ENCODE measurements at regions of chr3 and their contacts with region 1.

Region 1: GRCh38 chr3:188954590-188955208 is 217.1 kb upstream of the TPRG1 start:
- DNase-seq: peak; percentile 60
- ATAC-seq: peak; percentile 66
- H3K4me3 Mint-ChIP-seq: no peak overlapping the region
- H3K27ac Mint-ChIP-seq: no peak overlapping the region
- H3K4me1 Mint-ChIP-seq: peaks cover 25% of the 10 kb centered on the region
- H3K27me3 Mint-ChIP-seq: peaks cover 1% of the 10 kb centered on the region
- CTCF ChIP-seq: no peak

Region 2: GRCh38 chr3:187319699-187320302 is 1634.9 kb before region 1 on chr3:
- CTCF ChIA-PET with region 1: interaction called, 9 read pairs
- POLR2A ChIA-PET with region 1: no interaction called
- intact Hi-C with region 1: loop called (anchors 1 kb)
- DNase-seq: no peak
- ATAC-seq: peak; percentile 64
- H3K4me3 Mint-ChIP-seq: no peak overlapping the region
- H3K27ac Mint-ChIP-seq: no peak overlapping the region
- H3K4me1 Mint-ChIP-seq: peaks cover 6% of the 10 kb centered on the region
- H3K27me3 Mint-ChIP-seq: peaks cover 36% of the 10 kb centered on the region
- CTCF ChIP-seq: no peak

Region 3: DNA sequence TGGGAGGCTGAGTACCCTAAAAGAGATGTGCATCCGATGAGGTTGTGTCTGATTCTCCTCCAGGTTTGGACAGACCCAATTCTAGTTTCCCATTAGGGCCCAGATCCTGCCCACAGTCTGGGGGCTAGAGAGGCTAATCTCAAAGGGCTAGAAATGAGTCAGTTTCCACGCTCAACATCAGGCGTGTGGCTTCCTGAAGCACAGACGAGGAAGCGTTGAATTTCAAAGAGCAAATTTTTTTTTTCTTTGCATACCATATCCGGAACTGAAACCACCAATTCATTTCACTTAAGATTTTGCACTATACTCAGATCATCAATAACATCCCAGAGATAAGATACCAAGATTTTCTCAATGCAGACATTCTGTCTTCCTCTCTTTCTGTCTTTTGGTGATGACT is 1035.7 kb before region 1 on chr3:
- CTCF ChIA-PET with region 1: no interaction called
- POLR2A ChIA-PET with region 1: no interaction called
- intact Hi-C with region 1: loop called (anchors 2 kb)
- DNase-seq: peak; percentile 36
- ATAC-seq: peak; percentile 89
- H3K4me3 Mint-ChIP-seq: peak overlapping the region; percentile 77
- H3K27ac Mint-ChIP-seq: peak overlapping the region; percentile 86
- H3K4me1 Mint-ChIP-seq: peaks cover 32% of the 10 kb centered on the region
- H3K27me3 Mint-ChIP-seq: peaks cover 15% of the 10 kb centered on the region
- CTCF ChIP-seq: no peak

Region 4: DNA sequence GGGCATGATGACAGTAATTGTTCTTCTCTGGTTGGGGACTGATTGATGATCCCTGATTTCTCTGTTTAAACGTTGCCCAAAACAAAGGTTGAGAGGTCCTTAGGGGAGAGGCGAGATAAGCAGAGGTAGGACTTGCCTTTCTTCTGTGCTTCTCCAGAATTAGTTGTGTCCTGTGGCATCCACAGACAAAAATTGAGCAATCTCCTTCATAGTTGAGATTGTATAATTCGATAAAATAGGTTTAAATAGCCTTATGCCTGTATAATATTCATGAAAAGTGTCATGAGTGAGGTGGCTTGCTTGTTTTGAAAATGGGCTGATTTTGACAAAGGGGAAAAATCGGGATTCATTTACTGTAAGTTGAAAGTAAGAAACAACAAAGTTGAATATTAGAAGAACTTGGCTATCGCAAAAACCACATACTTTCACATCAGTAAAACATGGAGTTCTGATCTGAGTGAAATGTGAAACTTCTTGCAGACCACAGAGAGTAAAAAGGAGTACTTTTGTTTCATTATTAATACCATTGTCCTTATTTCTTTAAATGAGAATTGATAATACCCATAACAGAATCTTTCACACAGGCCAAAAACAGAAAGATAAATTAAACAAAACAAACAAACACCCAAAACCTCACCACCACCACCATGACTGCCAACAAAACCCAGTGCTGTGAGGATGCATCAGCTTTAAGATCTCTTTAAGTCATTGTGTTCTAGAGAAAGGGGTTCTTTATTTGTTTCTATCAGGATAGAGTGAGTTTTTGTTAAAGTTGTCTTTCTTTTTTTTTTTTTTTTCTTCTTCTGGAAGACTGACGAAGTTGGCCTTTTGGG is 645.0 kb before region 1 on chr3:
- CTCF ChIA-PET with region 1: interaction called, 9 read pairs
- POLR2A ChIA-PET with region 1: no interaction called
- intact Hi-C with region 1: loop called (anchors 10 kb)
- DNase-seq: no peak
- ATAC-seq: peak; percentile 78
- H3K4me3 Mint-ChIP-seq: peak overlapping the region; percentile 72
- H3K27ac Mint-ChIP-seq: peak overlapping the region; percentile 91
- H3K4me1 Mint-ChIP-seq: peaks cover 39% of the 10 kb centered on the region
- H3K27me3 Mint-ChIP-seq: no peaks in the 10 kb centered on the region
- CTCF ChIP-seq: no peak

Region 5: DNA sequence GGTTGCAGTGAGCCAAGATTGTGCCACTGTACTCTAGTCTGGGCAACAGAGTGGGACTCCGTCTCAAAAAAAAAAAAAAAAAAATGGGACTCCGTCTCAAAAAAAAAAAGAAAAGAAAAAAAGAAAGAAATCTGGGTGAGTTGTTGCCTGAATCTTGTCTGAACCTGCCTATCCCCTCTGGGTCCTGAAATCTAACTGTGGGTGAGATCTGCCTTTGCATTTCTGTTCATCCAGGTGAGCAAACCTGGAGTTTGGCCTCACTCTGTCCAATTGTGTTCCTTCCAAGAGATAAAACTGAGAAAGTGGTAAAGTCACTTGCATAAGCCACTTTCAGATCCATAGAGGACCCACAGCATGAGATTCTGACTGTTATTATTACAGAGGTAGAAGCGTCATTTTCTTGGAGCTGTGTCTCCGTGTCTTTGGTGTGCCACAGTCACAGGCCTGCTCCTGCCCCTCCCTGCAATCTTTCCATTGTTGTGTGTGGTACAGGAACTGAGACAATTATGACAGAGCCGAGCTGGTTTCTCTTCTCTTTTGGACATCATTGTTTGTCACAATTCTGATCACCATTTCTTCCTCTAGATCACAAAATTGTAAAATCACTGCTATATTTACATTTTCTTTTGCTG is 564.9 kb before region 1 on chr3:
- CTCF ChIA-PET with region 1: interaction called, 5 read pairs
- POLR2A ChIA-PET with region 1: no interaction called
- intact Hi-C with region 1: loop called (anchors 5 kb)
- DNase-seq: peak; percentile 29
- ATAC-seq: peak; percentile 84
- H3K4me3 Mint-ChIP-seq: peak overlapping the region; percentile 65
- H3K27ac Mint-ChIP-seq: peak overlapping the region; percentile 98
- H3K4me1 Mint-ChIP-seq: peaks cover 87% of the 10 kb centered on the region
- H3K27me3 Mint-ChIP-seq: no peaks in the 10 kb centered on the region
- CTCF ChIP-seq: no peak

Region 6: GRCh38 chr3:188598894-188599293 is 355.8 kb before region 1 on chr3:
- CTCF ChIA-PET with region 1: no interaction called
- POLR2A ChIA-PET with region 1: no interaction called
- intact Hi-C with region 1: no loop called
- DNase-seq: no peak
- ATAC-seq: no peak
- H3K4me3 Mint-ChIP-seq: no peak overlapping the region
- H3K27ac Mint-ChIP-seq: no peak overlapping the region
- H3K4me1 Mint-ChIP-seq: peaks cover 6% of the 10 kb centered on the region
- H3K27me3 Mint-ChIP-seq: no peaks in the 10 kb centered on the region
- CTCF ChIP-seq: no peak

Region 7: DNA sequence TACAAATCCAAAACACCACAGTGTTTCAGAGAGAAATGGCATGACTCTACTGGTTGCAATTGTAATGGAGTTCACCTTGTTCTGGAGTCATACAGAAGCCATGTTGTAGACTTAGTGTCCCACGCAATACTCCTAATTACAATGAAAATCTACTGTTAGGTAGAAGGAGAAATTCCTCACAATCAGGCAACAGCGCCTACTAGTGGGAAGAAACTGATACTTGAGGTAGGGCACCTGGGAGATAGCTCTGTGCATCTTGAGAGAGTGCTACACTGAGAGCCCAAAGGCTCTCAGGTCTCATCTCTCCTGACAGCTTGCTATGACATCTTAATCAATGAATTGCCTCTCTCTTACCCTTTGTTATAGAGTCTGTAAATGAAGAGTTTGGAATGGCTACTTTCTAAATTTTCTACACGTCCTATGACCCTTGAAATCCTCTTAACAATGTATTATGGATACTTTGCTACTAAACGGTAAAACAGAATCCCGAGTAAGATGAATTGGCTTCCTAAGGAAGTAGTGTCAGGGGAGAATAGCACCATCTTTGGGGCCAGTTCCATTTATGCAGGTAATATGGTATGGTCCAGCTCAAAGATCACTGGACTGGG is 205.6 kb before region 1 on chr3:
- CTCF ChIA-PET with region 1: interaction called, 22 read pairs
- POLR2A ChIA-PET with region 1: interaction called, 16 read pairs
- intact Hi-C with region 1: loop called (anchors 1 kb)
- DNase-seq: no peak
- ATAC-seq: no peak
- H3K4me3 Mint-ChIP-seq: no peak overlapping the region
- H3K27ac Mint-ChIP-seq: peak overlapping the region; percentile 55
- H3K4me1 Mint-ChIP-seq: peaks cover 43% of the 10 kb centered on the region
- H3K27me3 Mint-ChIP-seq: no peaks in the 10 kb centered on the region
- CTCF ChIP-seq: no peak

Region 8: DNA sequence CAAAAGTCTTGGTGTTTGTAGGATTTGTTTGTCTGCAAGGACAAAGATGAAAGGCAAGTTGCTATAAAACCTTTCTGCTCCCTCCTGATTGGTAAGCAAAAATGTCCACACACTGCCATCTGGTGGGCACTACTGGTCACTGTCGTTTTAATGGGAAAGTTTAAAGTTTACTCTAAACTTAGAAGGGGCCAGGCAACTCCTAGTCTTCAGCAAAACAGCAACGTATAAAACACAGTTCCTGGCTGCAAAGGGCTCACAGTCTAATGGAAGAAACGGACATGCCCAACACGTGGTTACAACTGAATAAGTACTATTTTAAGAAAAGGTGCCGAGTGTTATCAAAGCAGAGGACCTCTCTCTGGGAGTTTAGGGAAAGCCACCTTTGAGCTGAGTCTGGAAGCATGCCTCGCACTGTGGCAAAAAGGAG is 193.4 kb after region 1 on chr3:
- CTCF ChIA-PET with region 1: interaction called, 3 read pairs
- POLR2A ChIA-PET with region 1: no interaction called
- intact Hi-C with region 1: loop called (anchors 2 kb)
- DNase-seq: peak; percentile 27
- ATAC-seq: peak; percentile 60
- H3K4me3 Mint-ChIP-seq: no peak overlapping the region
- H3K27ac Mint-ChIP-seq: no peak overlapping the region
- H3K4me1 Mint-ChIP-seq: no peaks in the 10 kb centered on the region
- H3K27me3 Mint-ChIP-seq: peaks cover 8% of the 10 kb centered on the region
- CTCF ChIP-seq: peak; percentile 56

Measured in activated B cell treated with CpG ODN at 0.5 μM for 24 hours (primary cell).